ENCODE measurements at regions of chr10 and their contacts with region 1.

Region 1: GRCh38 chr10:46309511-46310510 is 23.0 kb downstream of the ANTXRL start:
- DNase-seq: no peak
- ATAC-seq: no peak
- H3K4me3 ChIP-seq: no peak overlapping the region
- H3K4me3 Mint-ChIP-seq: no peak overlapping the region
- H3K27ac ChIP-seq: no peak overlapping the region
- H3K27ac Mint-ChIP-seq: no peak overlapping the region
- H3K4me1 ChIP-seq: no peaks in the 10 kb centered on the region
- H3K4me1 Mint-ChIP-seq: no peaks in the 10 kb centered on the region
- H3K27me3 ChIP-seq: no peaks in the 10 kb centered on the region
- H3K27me3 Mint-ChIP-seq: no peaks in the 10 kb centered on the region
- CTCF ChIP-seq: no peak

Region 2: GRCh38 chr10:46035923-46036849 is 273.6 kb before region 1 on chr10:
- CTCF ChIA-PET with region 1: no interaction called
- POLR2A ChIA-PET with region 1: no interaction called
- intact Hi-C with region 1: no loop called
- DNase-seq: no peak
- ATAC-seq: no peak
- H3K4me3 ChIP-seq: no peak overlapping the region
- H3K4me3 Mint-ChIP-seq: no peak overlapping the region
- H3K27ac ChIP-seq: no peak overlapping the region
- H3K27ac Mint-ChIP-seq: no peak overlapping the region
- H3K4me1 ChIP-seq: no peaks in the 10 kb centered on the region
- H3K4me1 Mint-ChIP-seq: peaks cover 4% of the 10 kb centered on the region
- H3K27me3 ChIP-seq: no peaks in the 10 kb centered on the region
- H3K27me3 Mint-ChIP-seq: no peaks in the 10 kb centered on the region
- CTCF ChIP-seq: no peak

Region 3: DNA sequence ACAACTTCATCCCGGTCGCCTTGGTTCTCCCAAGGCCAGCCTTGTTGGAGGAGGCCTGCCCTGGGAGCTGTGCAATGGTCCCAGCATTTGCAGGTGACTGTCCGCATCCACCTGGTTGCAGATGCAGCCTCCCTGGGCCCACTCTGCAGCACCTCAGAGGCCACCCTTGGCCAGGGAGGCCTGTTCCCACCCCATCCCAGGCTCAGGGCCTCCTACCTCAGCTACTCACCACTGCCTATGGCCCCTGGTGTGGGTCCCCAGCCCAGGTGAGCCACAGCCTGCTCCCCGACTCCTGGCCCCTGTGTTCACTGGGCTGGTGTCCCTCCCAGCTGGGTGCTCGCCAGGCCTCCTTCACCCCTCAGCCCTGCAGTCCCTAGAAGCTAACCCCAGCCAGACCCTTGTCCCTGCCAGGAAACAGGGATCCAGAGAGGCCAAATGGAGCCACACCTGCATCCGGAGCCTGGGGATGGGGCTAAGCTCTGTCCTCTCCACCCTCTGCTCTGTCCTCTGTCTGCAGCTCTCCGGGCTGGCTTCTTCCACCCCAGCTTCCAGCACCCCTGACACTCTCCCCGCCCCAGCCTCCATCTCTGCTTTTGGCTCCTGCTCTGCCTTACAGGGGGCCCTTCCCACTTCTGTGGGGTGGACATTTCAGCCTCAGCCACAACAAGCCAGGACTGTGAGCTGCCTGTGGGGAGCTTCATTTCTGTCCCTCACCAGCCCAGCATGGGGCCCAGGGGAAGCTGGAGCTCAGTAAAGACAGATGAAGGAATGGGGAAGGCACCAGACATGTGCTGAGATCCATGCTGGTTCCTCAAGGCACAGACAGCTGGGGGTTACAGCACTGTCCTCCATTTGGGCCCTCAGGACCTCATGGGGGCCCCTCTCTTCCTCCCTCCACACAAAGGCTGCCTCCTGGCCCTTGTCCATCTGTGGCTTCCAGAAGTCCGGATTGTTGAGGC is 58.6 kb before region 1 on chr10:
- CTCF ChIA-PET with region 1: no interaction called
- POLR2A ChIA-PET with region 1: no interaction called
- intact Hi-C with region 1: loop called in 1 of 2 experiments (anchors 1 kb)
- DNase-seq: no peak
- ATAC-seq: no peak
- H3K4me3 ChIP-seq: no peak overlapping the region
- H3K4me3 Mint-ChIP-seq: no peak overlapping the region
- H3K27ac ChIP-seq: no peak overlapping the region
- H3K27ac Mint-ChIP-seq: peak overlapping the region; percentile 87
- H3K4me1 ChIP-seq: peaks cover 3% of the 10 kb centered on the region
- H3K4me1 Mint-ChIP-seq: peaks cover 15% of the 10 kb centered on the region
- H3K27me3 ChIP-seq: no peaks in the 10 kb centered on the region
- H3K27me3 Mint-ChIP-seq: no peaks in the 10 kb centered on the region
- CTCF ChIP-seq: no peak

Region 4: GRCh38 chr10:46284293-46285229 is 25.2 kb before region 1 on chr10:
- CTCF ChIA-PET with region 1: no interaction called
- POLR2A ChIA-PET with region 1: no interaction called
- intact Hi-C with region 1: no loop called
- DNase-seq: peak; percentile 42 to 86 (median 73)
- ATAC-seq: peak; percentile 72
- H3K4me3 ChIP-seq: peak overlapping the region; percentile 58 to 67
- H3K4me3 Mint-ChIP-seq: peak overlapping the region; percentile 92
- H3K27ac ChIP-seq: peak overlapping the region in 1 of 2 experiments; percentile 26
- H3K27ac Mint-ChIP-seq: peak overlapping the region; percentile 27
- H3K4me1 ChIP-seq: peaks cover 10% of the 10 kb centered on the region
- H3K4me1 Mint-ChIP-seq: peaks cover 18% of the 10 kb centered on the region
- H3K27me3 ChIP-seq: no peaks in the 10 kb centered on the region
- H3K27me3 Mint-ChIP-seq: no peaks in the 10 kb centered on the region
- CTCF ChIP-seq: no peak

Measured in CD8-positive, alpha-beta T cell (primary cell).